ENCODE measurements at regions of chr4 and their contacts with region 1.

Region 1: DNA sequence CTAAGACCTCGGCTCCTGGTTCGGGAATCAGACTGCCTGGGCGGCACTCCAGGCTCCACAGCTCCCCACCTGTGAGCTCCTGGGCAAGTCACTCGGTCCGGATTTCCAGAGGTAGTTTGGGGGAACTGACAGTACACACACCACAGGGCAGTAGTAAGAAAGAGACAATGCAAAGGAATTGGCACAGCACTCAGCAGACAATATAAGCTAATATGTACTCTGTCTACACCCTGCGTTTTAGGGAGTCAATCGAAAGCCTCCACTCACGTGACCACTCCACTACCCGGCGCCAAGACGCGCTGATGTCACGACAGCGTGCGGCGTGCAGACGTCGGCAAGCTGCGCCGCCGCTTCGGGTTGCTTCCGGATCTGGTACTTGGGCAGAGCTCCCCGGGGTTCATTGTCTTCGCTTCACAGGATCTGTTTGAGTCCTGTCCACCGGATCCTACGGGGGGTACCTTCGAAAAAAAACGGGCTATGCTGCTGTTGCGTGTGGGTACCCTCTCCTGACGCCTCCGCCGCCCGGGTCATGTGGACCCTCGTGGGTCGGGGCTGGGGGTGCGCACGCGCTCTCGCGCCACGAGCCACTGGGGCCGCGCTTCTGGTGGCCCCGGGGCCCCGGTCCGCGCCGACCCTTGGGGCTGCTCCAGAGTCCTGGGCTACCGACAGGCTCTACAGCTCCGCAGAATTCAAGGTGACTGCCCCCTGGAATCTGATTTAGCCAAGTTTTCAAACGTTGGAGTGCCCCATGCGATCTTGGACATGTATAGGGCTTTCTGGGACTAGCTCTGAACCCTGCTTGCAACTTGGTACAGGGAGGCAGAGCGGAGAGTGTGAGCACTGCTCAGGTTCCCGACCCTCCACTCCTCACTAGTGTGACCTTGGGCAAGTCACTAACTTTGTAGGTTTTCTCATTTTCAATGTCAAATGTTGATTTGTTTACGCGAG is at the start of gene GUF1:
- DNase-seq: peak; percentile 86
- H3K4me3 ChIP-seq: peak within 1 kb of the TSS; percentile 72 to 87
- H3K27ac ChIP-seq: peak within 1 kb of the TSS; percentile 85
- H3K4me1 ChIP-seq: peaks cover 9% of the 10 kb centered on the region
- H3K27me3 ChIP-seq: no peaks in the 10 kb centered on the region
- CTCF ChIP-seq: peak in 2 of 4 experiments; percentile 1
- POLR2A ChIP-seq: peak; percentile 29
- total RNA-seq, gene GUF1: 25.9 to 28.6 TPM

Region 2: GRCh38 chr4:44342800-44343199 is 335.6 kb before region 1 on chr4:
- intact Hi-C with region 1: no loop called
- DNase-seq: no peak
- H3K4me3 ChIP-seq: no peak overlapping the region
- H3K27ac ChIP-seq: no peak overlapping the region
- H3K4me1 ChIP-seq: no peaks in the 10 kb centered on the region
- H3K27me3 ChIP-seq: no peaks in the 10 kb centered on the region
- CTCF ChIP-seq: no peak
- POLR2A ChIP-seq: no peak

Region 3: DNA sequence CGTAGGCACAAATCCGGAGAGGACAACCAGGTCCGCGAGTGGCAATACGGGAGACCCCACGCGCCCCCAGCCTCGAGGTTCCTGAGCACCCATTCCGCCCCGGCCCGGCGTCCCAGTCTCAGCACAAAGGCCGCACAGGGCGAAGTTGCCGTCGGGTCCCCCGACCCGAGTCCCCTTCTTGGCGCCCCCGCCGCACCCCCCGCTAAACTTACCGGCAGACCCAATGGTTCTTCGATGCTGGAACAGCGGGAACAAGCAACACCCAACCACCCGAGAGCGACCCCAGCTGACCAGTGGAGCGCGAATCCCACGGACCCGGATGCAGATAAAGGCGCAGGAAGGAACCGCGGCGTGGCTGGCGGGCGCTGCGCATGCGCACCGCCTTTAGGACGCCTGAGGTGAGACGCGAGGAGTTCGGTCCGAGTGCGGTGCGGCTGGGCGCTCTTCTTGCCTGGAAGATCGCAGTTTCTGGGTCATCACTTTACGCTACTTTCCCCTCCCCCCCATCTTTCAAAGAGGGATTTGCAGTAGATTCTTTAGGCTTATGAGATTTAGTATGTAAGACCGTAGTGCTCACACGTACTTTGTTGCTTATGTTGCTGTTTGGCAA is 48.0 kb after region 1 on chr4 and contains the start of gene GNPDA2:
- intact Hi-C with region 1: loop called (anchors 5 kb)
- DNase-seq: peak; percentile 84
- H3K4me3 ChIP-seq: peak within 1 kb of the TSS; percentile 83 to 87
- H3K27ac ChIP-seq: peak within 1 kb of the TSS; percentile 78 to 83
- H3K4me1 ChIP-seq: no peaks in the 10 kb centered on the region
- H3K27me3 ChIP-seq: no peaks in the 10 kb centered on the region
- CTCF ChIP-seq: peak in 2 of 4 experiments; percentile 26 to 30
- POLR2A ChIP-seq: peak; percentile 40
- total RNA-seq, gene GNPDA2: 13.2 to 16.2 TPM

Region 4: GRCh38 chr4:44738615-44739014 is 60.2 kb after region 1 on chr4:
- intact Hi-C with region 1: no loop called
- DNase-seq: no peak
- H3K4me3 ChIP-seq: no peak overlapping the region
- H3K27ac ChIP-seq: no peak overlapping the region
- H3K4me1 ChIP-seq: no peaks in the 10 kb centered on the region
- H3K27me3 ChIP-seq: no peaks in the 10 kb centered on the region
- CTCF ChIP-seq: no peak
- POLR2A ChIP-seq: no peak